Naive thymus-derived CD4-positive, alpha-beta T cell (primary cell): ENCODE measurements at regions of chr13 and their contacts with region 1.

Region 1: DNA sequence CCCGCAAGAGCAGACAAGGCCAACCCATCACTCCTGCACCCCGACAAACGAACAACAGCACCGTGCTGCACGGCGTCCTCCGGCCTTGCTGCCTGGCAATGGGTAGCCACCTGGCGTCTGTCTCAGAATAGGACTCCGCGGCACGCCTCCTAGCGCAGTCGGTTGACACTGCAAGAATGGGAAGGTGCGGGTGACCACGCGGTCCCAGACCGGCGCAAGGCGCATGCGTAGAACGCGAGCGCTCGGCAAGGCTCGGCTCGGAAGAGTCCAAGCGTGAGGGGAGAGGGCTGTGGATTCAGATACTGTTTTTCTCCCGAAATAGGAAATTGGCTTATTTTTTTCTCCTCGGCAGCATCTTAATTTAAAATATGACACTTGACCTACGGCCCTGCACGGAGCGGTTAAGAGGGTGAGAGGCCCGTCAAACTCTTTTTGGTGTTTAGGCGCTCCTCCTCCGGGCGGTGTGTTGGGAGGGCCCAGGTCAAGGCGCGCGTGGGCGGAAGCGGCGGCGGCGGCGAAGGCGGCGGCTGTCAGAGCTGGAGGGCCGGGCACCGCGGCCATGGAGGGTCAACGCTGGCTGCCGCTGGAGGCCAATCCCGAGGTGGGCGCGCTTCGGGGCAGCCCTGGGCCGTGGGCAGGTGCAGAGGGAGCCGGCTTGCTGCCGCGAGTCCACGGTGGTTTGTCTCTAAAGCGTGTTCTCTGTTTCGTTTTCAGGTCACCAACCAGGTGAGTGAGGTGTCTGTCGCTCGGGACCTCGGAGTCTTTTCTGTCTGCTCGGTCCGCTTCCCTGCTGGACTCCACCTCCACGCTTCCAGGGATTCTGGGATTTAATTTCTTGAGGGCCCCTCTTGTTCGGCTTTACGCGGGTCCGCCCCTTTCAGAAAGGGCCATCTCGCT is at the start of gene UCHL3:
- DNase-seq: peak; percentile 94 to 99 (median 97)
- ATAC-seq: peak; percentile 97
- H3K4me3 ChIP-seq: peak within 1 kb of the TSS; percentile 95
- H3K4me3 Mint-ChIP-seq: peak within 1 kb of the TSS; percentile 91 to 99 (median 96)
- H3K27ac ChIP-seq: peak within 1 kb of the TSS; percentile 84
- H3K27ac Mint-ChIP-seq: peak within 1 kb of the TSS; percentile 94 to 99 (median 98)
- H3K4me1 ChIP-seq: peaks cover 15% of the 10 kb centered on the region in 2 donors
- H3K4me1 Mint-ChIP-seq: peaks cover 27 to 53% (median 46%) of the 10 kb centered on the region in 7 donors
- H3K27me3 ChIP-seq: no peaks in the 10 kb centered on the region
- H3K27me3 Mint-ChIP-seq: peaks cover 0 to 2% (median 0%) of the 10 kb centered on the region in 5 donors
- total RNA-seq, gene UCHL3: 18.6 to 35.8 (median 20.6) TPM

Region 2: GRCh38 chr13:73715114-73715910 is 1834.2 kb before region 1 on chr13:
- CTCF ChIA-PET with region 1: no interaction called
- POLR2A ChIA-PET with region 1: no interaction called
- intact Hi-C with region 1: loop called in 1 of 2 experiments (anchors 5 kb)
- DNase-seq: peak in 8 of 9 donors; percentile 53 to 85 (median 77)
- ATAC-seq: peak; percentile 90
- H3K4me3 ChIP-seq: peak overlapping the region; percentile 7
- H3K4me3 Mint-ChIP-seq: peak overlapping the region; percentile 72 to 86 (median 78)
- H3K27ac ChIP-seq: peak overlapping the region; percentile 67
- H3K27ac Mint-ChIP-seq: peak overlapping the region; percentile 87 to 99 (median 97)
- H3K4me1 ChIP-seq: peaks cover 34 to 43% of the 10 kb centered on the region in 2 donors
- H3K4me1 Mint-ChIP-seq: peaks cover 25 to 80% (median 58%) of the 10 kb centered on the region in 7 donors
- H3K27me3 ChIP-seq: no peaks in the 10 kb centered on the region
- H3K27me3 Mint-ChIP-seq: no peaks in the 10 kb centered on the region

Region 3: GRCh38 chr13:75482070-75482819 is 67.3 kb before region 1 on chr13 and contains the start of gene TBC1D4:
- CTCF ChIA-PET with region 1: no interaction called
- POLR2A ChIA-PET with region 1: no interaction called
- intact Hi-C with region 1: loop called (anchors 1 kb)
- DNase-seq: peak in 8 of 9 donors; percentile 19 to 69 (median 22)
- ATAC-seq: peak; percentile 85
- H3K4me3 ChIP-seq: peak within 1 kb of the TSS; percentile 60
- H3K4me3 Mint-ChIP-seq: peak within 1 kb of the TSS; percentile 90 to 99 (median 95)
- H3K27ac ChIP-seq: no peak within 1 kb of the TSS
- H3K27ac Mint-ChIP-seq: peak within 1 kb of the TSS in 1 of 9 donors; percentile 83
- H3K4me1 ChIP-seq: peaks cover 0 to 5% of the 10 kb centered on the region in 2 donors
- H3K4me1 Mint-ChIP-seq: peaks cover 7 to 24% (median 18%) of the 10 kb centered on the region in 7 donors
- H3K27me3 ChIP-seq: peaks cover 12 to 15% of the 10 kb centered on the region in 2 donors
- H3K27me3 Mint-ChIP-seq: peaks cover 57 to 80% (median 74%) of the 10 kb centered on the region in 5 donors
- total RNA-seq, gene TBC1D4: 12.4 to 73.8 (median 42.8) TPM

Region 4: DNA sequence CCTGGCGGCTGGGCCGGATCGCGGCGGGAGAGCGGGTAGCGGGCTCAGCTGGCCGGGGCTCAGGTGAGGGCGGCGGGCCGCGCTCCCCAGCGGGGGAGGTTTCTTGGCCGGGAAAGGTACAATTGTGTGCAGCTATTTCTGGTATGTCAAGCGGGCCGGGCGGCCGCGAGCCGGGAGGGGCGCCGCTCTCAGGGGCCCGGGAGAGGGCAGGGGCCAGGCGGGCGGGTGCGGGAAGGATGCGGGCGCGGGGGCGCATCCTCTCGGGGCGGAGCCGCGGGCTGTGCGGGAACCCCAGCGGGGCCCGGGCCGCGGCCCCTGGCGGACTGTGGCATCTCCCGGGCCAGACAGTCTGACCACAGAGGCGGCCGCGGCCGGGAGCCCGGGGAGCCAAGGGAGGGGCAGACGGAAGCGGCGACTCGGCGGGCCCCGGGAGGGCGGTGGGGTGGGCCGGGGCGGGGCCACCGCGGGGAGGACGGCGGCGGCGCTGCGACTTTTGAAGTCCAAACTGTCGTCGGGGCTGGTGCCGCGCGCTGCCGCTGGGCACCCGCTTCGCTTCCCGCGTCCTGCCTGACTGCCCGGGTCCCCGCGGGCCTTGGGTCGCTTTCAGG is 86.4 kb after region 1 on chr13 and contains the start of gene LMO7:
- CTCF ChIA-PET with region 1: no interaction called
- POLR2A ChIA-PET with region 1: no interaction called
- intact Hi-C with region 1: loop called (anchors 1 to 2 kb)
- DNase-seq: peak; percentile 39 to 60 (median 44)
- ATAC-seq: peak; percentile 69
- H3K4me3 ChIP-seq: peak within 1 kb of the TSS; percentile 75
- H3K4me3 Mint-ChIP-seq: peak within 1 kb of the TSS; percentile 77 to 91 (median 85)
- H3K27ac ChIP-seq: peak within 1 kb of the TSS; percentile 34
- H3K27ac Mint-ChIP-seq: peak within 1 kb of the TSS; percentile 38 to 82 (median 71)
- H3K4me1 ChIP-seq: no peaks in the 10 kb centered on the region
- H3K4me1 Mint-ChIP-seq: peaks cover 7 to 23% (median 18%) of the 10 kb centered on the region in 7 donors
- H3K27me3 ChIP-seq: no peaks in the 10 kb centered on the region
- H3K27me3 Mint-ChIP-seq: peaks cover 0 to 21% (median 10%) of the 10 kb centered on the region in 5 donors
- total RNA-seq, gene LMO7: 18.0 to 68.1 (median 45.3) TPM

Region 5: GRCh38 chr13:77026818-77027585 is 1477.5 kb after region 1 on chr13 and contains the start of gene FBXL3:
- CTCF ChIA-PET with region 1: no interaction called
- POLR2A ChIA-PET with region 1: no interaction called
- intact Hi-C with region 1: loop called (anchors 1 to 10 kb)
- DNase-seq: peak; percentile 77 to 88 (median 84)
- ATAC-seq: peak; percentile 90
- H3K4me3 ChIP-seq: peak within 1 kb of the TSS; percentile 87
- H3K4me3 Mint-ChIP-seq: peak within 1 kb of the TSS; percentile 93 to 100 (median 98)
- H3K27ac ChIP-seq: peak within 1 kb of the TSS; percentile 100
- H3K27ac Mint-ChIP-seq: peak within 1 kb of the TSS; percentile 92 to 99 (median 94)
- H3K4me1 ChIP-seq: peaks cover 30 to 35% of the 10 kb centered on the region in 2 donors
- H3K4me1 Mint-ChIP-seq: peaks cover 36 to 61% (median 51%) of the 10 kb centered on the region in 7 donors
- H3K27me3 ChIP-seq: no peaks in the 10 kb centered on the region
- H3K27me3 Mint-ChIP-seq: peaks cover 0 to 6% (median 3%) of the 10 kb centered on the region in 5 donors
- total RNA-seq, gene FBXL3: 44.2 to 94.2 (median 70.8) TPM

Region 6: DNA sequence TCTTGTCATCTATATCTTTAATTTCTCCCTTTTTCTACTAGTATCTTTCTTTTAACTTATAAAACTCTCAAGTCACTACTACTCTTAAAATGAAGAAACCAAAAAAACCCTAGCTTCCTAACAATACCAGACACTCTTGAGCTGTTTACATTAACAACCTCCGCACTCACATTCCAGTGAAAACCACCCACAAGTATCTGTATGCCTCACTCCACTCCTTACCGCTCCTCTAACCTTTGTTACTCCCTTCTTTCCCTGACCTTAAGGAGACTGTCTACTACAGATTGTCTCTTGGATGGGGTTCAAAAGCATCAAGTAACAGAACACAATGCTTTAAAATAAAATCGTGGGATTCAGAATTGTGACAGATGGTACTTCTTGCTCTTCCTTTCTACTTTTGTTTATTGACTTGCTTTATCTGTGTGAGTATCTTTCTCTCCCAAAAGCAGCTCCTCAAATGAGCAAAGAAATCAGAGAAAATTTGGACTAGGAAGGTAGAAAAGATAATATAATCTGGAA is 1587.5 kb after region 1 on chr13:
- CTCF ChIA-PET with region 1: no interaction called
- POLR2A ChIA-PET with region 1: no interaction called
- intact Hi-C with region 1: no loop called
- DNase-seq: no peak
- ATAC-seq: no peak
- H3K4me3 ChIP-seq: no peak overlapping the region
- H3K4me3 Mint-ChIP-seq: no peak overlapping the region
- H3K27ac ChIP-seq: no peak overlapping the region
- H3K27ac Mint-ChIP-seq: peak overlapping the region in 4 of 9 donors; percentile 8 to 72 (median 56)
- H3K4me1 ChIP-seq: no peaks in the 10 kb centered on the region
- H3K4me1 Mint-ChIP-seq: peaks cover 0 to 13% (median 0%) of the 10 kb centered on the region in 7 donors
- H3K27me3 ChIP-seq: no peaks in the 10 kb centered on the region
- H3K27me3 Mint-ChIP-seq: no peaks in the 10 kb centered on the region